ENCODE measurements at regions of chr1 and their contacts with region 1.

Region 1: GRCh38 chr1:204151552-204152309 is at the start of gene ETNK2:
- DNase-seq: peak; percentile 50 to 66 (median 58)
- ATAC-seq: peak; percentile 90
- H3K4me3 ChIP-seq: peak within 1 kb of the TSS; percentile 63
- H3K4me3 Mint-ChIP-seq: peak within 1 kb of the TSS; percentile 59 to 86 (median 76)
- H3K27ac ChIP-seq: peak within 1 kb of the TSS; percentile 72
- H3K27ac Mint-ChIP-seq: peak within 1 kb of the TSS in 5 of 9 donors; percentile 41 to 77 (median 56)
- H3K4me1 ChIP-seq: peaks cover 4% of the 10 kb centered on the region in 2 donors
- H3K4me1 Mint-ChIP-seq: peaks cover 2 to 17% (median 9%) of the 10 kb centered on the region in 7 donors
- H3K27me3 ChIP-seq: no peaks in the 10 kb centered on the region
- H3K27me3 Mint-ChIP-seq: peaks cover 0 to 35% (median 0%) of the 10 kb centered on the region in 5 donors
- total RNA-seq, gene ETNK2: 0.17 to 16.9 (median 4.9) TPM

Region 2: DNA sequence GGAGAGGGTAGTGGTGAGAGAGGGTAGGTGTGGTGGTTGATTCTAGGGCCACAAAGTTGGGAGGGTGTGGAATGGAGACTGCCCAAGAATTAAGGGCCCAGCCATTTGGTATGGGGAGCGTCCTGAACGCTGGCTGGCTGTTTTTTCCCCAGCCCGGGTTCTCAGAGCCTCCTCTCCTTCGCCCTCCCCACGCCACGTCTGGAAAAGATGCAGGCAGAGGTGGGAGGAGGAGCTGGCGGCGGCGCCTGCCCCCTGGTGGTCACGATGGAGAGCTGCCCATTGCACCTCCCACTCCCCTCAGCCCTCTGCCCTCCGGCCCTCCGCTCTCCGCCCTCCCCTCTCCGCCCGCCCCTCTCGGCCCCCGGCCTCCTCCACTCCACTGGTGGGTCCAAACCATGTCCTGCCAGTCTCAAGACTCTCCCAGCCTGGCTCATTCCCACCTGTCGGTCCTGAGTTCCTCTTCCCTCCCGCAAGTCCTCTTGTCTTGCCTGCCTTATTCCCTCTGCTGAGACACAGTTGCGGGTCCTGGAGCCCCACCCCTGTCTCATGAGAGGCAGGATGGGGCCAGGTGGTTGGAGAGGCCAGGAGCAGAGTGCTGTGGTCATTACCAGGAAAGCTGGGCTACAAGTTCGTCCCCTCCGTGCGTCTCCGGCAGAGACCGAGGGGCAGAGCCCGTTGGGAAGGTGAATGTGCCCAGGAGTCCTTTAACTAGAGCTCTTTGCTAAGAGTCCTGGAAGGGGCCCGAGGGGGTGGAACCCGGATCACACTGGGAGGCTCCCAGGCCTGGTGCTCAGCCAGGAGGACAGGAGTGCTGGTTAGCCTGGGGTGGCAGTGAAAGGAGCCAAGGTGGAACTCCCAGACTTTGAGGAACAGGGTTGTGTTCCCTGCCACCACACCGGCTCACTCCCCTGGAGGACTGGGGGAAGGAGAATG is 22.5 kb before region 1 on chr1:
- CTCF ChIA-PET with region 1: no interaction called
- POLR2A ChIA-PET with region 1: no interaction called
- intact Hi-C with region 1: loop called in 1 of 2 experiments (anchors 1 kb)
- DNase-seq: peak; percentile 19 to 70 (median 48)
- ATAC-seq: peak; percentile 84
- H3K4me3 ChIP-seq: no peak overlapping the region
- H3K4me3 Mint-ChIP-seq: peak overlapping the region in 5 of 10 donors; percentile 13 to 47 (median 24)
- H3K27ac ChIP-seq: no peak overlapping the region
- H3K27ac Mint-ChIP-seq: peak overlapping the region in 1 of 9 donors; percentile 48
- H3K4me1 ChIP-seq: no peaks in the 10 kb centered on the region
- H3K4me1 Mint-ChIP-seq: peaks cover 0 to 12% (median 9%) of the 10 kb centered on the region in 7 donors
- H3K27me3 ChIP-seq: no peaks in the 10 kb centered on the region
- H3K27me3 Mint-ChIP-seq: no peaks in the 10 kb centered on the region

Region 3: GRCh38 chr1:204350857-204351573 is 199.3 kb after region 1 on chr1:
- CTCF ChIA-PET with region 1: no interaction called
- POLR2A ChIA-PET with region 1: no interaction called
- intact Hi-C with region 1: no loop called
- DNase-seq: no peak
- ATAC-seq: peak; percentile 26
- H3K4me3 ChIP-seq: no peak overlapping the region
- H3K4me3 Mint-ChIP-seq: peak overlapping the region in 1 of 10 donors; percentile 27
- H3K27ac ChIP-seq: no peak overlapping the region
- H3K27ac Mint-ChIP-seq: no peak overlapping the region
- H3K4me1 ChIP-seq: no peaks in the 10 kb centered on the region
- H3K4me1 Mint-ChIP-seq: peaks cover 0 to 6% (median 5%) of the 10 kb centered on the region in 7 donors
- H3K27me3 ChIP-seq: no peaks in the 10 kb centered on the region
- H3K27me3 Mint-ChIP-seq: peaks cover 0 to 4% (median 0%) of the 10 kb centered on the region in 5 donors

Measured in naive thymus-derived CD4-positive, alpha-beta T cell (primary cell).